ENCODE measurements at regions of chr6 and their contacts with region 1.

Region 1: GRCh38 chr6:135109761-135110160 is 55.1 kb upstream of the HBS1L start:
- DNase-seq: no peak
- H3K4me3 Mint-ChIP-seq: no peak overlapping the region
- H3K27ac Mint-ChIP-seq: no peak overlapping the region
- H3K4me1 Mint-ChIP-seq: no peaks in the 10 kb centered on the region
- H3K27me3 Mint-ChIP-seq: peaks cover 5% of the 10 kb centered on the region
- CTCF ChIP-seq: no peak

Region 2: DNA sequence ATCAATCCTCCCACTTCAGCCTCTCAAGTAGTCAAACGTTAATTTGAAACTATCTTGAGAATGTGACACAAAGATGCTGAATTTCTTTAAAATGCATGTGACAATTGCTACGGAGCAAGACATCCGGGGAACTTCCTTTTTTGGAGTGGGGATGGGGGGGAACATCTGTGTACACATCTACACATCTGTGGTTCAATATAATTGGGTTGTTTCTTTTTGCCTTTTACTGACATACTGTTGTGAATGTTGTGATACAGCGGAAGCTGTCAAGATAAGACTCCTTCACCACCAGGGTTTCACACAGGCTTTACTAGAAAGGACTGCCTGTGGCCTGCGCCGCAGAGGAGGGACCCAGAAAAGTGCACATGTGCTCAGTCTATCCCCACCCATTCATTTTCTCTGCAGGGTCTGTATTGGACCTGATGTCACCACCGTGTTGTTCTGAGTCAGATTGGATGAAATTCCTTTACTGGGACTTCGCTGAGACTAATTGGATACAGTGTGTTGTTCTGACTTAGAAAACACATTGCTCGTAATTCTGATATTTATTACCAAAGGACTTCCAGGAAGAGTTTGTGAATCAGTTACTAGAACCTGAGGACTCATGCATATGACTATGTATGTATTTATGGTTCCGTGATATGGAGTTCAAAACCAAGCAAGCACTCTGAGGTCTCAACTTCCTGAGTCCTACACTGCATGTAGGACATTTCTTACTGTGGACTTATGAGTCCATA is 693.2 kb before region 1 on chr6:
- CTCF ChIA-PET with region 1: interaction called, 10 read pairs
- intact Hi-C with region 1: no loop called
- DNase-seq: no peak
- H3K4me3 Mint-ChIP-seq: no peak overlapping the region
- H3K27ac Mint-ChIP-seq: no peak overlapping the region
- H3K4me1 Mint-ChIP-seq: peaks cover 11% of the 10 kb centered on the region
- H3K27me3 Mint-ChIP-seq: no peaks in the 10 kb centered on the region
- CTCF ChIP-seq: no peak